Naive thymus-derived CD4-positive, alpha-beta T cell (primary cell): ENCODE measurements at regions of chr9 and their contacts with region 1.

Region 1: GRCh38 chr9:77807281-77807683 is 159.2 kb upstream of the GNA14 start:
- DNase-seq: no peak
- ATAC-seq: peak; percentile 47
- H3K4me3 ChIP-seq: no peak overlapping the region
- H3K4me3 Mint-ChIP-seq: no peak overlapping the region
- H3K27ac ChIP-seq: no peak overlapping the region
- H3K27ac Mint-ChIP-seq: peak overlapping the region in 2 of 9 donors; percentile 9 to 14
- H3K4me1 ChIP-seq: peaks cover 0 to 5% of the 10 kb centered on the region in 2 donors
- H3K4me1 Mint-ChIP-seq: peaks cover 13 to 44% (median 38%) of the 10 kb centered on the region in 7 donors
- H3K27me3 ChIP-seq: no peaks in the 10 kb centered on the region
- H3K27me3 Mint-ChIP-seq: no peaks in the 10 kb centered on the region

Region 2: DNA sequence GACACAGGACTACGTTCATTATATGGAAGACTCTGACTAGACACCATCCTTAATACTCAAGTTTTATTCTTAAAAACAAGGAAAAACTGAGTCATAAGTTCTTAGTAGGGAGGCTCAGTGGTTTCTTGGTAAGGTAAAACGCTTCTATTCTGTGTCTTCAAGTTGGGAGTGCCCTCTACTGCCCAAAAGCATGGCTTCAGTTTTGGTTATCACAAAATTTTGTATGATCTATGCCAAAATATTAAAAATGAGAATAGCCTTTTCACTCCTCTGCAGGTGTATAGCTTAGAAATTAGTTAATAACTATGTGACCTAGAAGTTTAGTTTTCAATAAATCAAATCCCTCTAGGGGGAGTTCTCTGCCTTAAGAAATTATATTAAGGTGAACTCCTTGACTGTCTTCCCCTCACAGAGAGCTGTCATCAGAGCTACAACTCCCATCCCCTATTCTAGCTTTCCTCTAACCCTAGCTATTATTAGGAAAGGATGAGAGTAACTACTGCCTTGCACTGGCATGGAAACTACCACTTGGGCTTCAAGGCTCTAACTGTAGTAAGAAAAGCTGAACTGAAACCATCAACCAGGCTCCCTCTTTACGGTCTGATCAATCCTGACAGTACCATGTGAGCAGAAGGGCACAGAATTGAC is 34.6 kb after region 1 on chr9:
- CTCF ChIA-PET with region 1: no interaction called
- POLR2A ChIA-PET with region 1: no interaction called
- intact Hi-C with region 1: loop called in 1 of 2 experiments (anchors 5 kb)
- DNase-seq: peak in 5 of 9 donors; percentile 4 to 39 (median 17)
- ATAC-seq: peak; percentile 24
- H3K4me3 ChIP-seq: no peak overlapping the region
- H3K4me3 Mint-ChIP-seq: no peak overlapping the region
- H3K27ac ChIP-seq: no peak overlapping the region
- H3K27ac Mint-ChIP-seq: peak overlapping the region in 3 of 9 donors; percentile 17 to 32 (median 19)
- H3K4me1 ChIP-seq: no peaks in the 10 kb centered on the region
- H3K4me1 Mint-ChIP-seq: peaks cover 7 to 25% (median 13%) of the 10 kb centered on the region in 7 donors
- H3K27me3 ChIP-seq: no peaks in the 10 kb centered on the region
- H3K27me3 Mint-ChIP-seq: no peaks in the 10 kb centered on the region